Activated CD8-positive, alpha-beta T cell treated with anti-CD3 and anti-CD28 coated beads for 36 hours (primary cell): ENCODE measurements at regions of chr17 and their contacts with region 1.

Region 1: GRCh38 chr17:8118769-8119580 is 661 bp upstream of the ALOXE3 start:
- DNase-seq: peak; percentile 95
- ATAC-seq: peak; percentile 57
- H3K4me3 Mint-ChIP-seq: peak overlapping the region; percentile 97
- H3K27ac Mint-ChIP-seq: peak overlapping the region; percentile 95
- H3K4me1 Mint-ChIP-seq: peaks cover 35% of the 10 kb centered on the region
- H3K27me3 Mint-ChIP-seq: peaks cover 43% of the 10 kb centered on the region
- CTCF ChIP-seq: peak; percentile 94

Region 2: DNA sequence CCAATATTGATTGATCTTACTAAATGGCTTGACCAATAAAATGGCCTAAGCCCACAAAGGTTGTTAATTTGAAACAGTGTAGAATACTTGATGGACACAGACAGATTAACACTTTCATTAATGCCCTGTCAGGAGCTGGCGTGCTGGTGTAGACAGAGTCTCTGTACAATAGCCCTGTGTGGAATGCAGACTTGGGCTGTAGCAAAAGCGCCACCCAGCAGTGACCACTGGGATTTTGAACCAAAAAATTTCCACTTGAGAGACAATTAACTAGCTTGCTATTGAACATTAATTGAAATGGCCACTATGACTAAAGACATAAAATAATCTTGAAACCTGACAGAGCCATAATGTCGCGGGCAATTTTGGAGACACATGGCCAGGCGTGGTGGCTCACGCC is 136.3 kb before region 1 on chr17:
- CTCF ChIA-PET with region 1: no interaction called
- POLR2A ChIA-PET with region 1: no interaction called
- intact Hi-C with region 1: no loop called
- DNase-seq: no peak
- ATAC-seq: no peak
- H3K4me3 Mint-ChIP-seq: no peak overlapping the region
- H3K27ac Mint-ChIP-seq: no peak overlapping the region
- H3K4me1 Mint-ChIP-seq: no peaks in the 10 kb centered on the region
- H3K27me3 Mint-ChIP-seq: peaks cover 2% of the 10 kb centered on the region
- CTCF ChIP-seq: no peak

Region 3: GRCh38 chr17:7997186-7997585 is 121.8 kb before region 1 on chr17:
- CTCF ChIA-PET with region 1: no interaction called
- POLR2A ChIA-PET with region 1: no interaction called
- intact Hi-C with region 1: no loop called
- DNase-seq: peak; percentile 74
- ATAC-seq: peak; percentile 87
- H3K4me3 Mint-ChIP-seq: no peak overlapping the region
- H3K27ac Mint-ChIP-seq: no peak overlapping the region
- H3K4me1 Mint-ChIP-seq: peaks cover 11% of the 10 kb centered on the region
- H3K27me3 Mint-ChIP-seq: peaks cover 19% of the 10 kb centered on the region
- CTCF ChIP-seq: peak; percentile 56

Region 4: DNA sequence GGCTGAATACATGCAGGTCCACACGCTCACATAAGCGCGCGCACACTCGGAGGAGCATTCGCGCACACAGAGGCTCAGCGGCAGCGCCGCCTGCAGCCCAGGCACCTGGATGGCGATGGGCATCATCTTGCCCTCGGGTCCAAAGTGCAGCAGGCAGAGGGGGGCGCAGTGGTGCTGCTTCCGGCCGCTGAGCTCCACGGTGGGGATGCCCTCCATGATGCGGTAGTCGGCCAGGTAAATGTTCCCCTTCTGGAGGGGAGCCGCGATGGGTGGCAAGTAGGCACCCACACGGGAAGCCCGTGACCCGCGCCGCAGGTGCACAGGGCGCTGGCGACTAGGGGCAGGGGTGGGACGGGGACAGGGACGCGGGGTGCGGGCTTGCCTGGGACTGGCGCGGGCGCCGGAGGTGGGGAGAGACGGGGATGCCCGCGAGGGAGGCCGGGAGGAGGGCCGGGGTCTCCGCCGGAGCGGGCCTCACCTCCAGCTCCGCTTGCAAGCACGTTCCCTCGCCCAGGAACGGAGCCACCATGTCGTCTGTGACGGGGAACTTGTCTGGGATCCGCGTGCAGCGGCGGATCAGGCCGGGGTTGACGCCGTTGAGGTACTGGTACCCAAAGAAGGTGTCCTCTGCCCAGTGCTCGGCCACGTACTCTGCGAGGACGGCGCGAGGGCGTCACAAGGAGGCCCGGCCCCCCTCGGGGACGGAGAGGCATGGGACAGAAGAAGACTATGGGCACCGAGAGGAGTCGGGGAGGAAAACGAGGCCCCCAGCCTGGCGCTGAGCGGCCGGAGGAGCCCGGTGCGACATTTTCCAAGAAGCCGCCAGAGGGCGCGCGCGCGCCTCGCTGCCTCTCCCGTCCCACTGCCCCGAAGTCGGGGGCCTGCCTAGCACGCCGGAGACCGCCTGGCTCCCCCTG is 39.4 kb before region 1 on chr17:
- CTCF ChIA-PET with region 1: interaction called, 98 read pairs
- POLR2A ChIA-PET with region 1: interaction called, 16 read pairs
- intact Hi-C with region 1: loop called (anchors 5 kb)
- DNase-seq: peak; percentile 93
- ATAC-seq: peak; percentile 94
- H3K4me3 Mint-ChIP-seq: peak overlapping the region; percentile 96
- H3K27ac Mint-ChIP-seq: peak overlapping the region; percentile 93
- H3K4me1 Mint-ChIP-seq: peaks cover 11% of the 10 kb centered on the region
- H3K27me3 Mint-ChIP-seq: peaks cover 5% of the 10 kb centered on the region
- CTCF ChIP-seq: peak; percentile 87

Region 5: GRCh38 chr17:8138672-8139371 is 19.8 kb after region 1 on chr17:
- CTCF ChIA-PET with region 1: interaction called, 63 read pairs
- POLR2A ChIA-PET with region 1: interaction called, 21 read pairs
- intact Hi-C with region 1: loop called (anchors 2 kb)
- DNase-seq: peak; percentile 98
- ATAC-seq: peak; percentile 90
- H3K4me3 Mint-ChIP-seq: no peak overlapping the region
- H3K27ac Mint-ChIP-seq: no peak overlapping the region
- H3K4me1 Mint-ChIP-seq: no peaks in the 10 kb centered on the region
- H3K27me3 Mint-ChIP-seq: peaks cover 3% of the 10 kb centered on the region
- CTCF ChIP-seq: peak; percentile 87

Region 6: GRCh38 chr17:8162233-8162996 is 43.4 kb after region 1 on chr17 and contains the start of gene VAMP2:
- CTCF ChIA-PET with region 1: interaction called, 18 read pairs
- POLR2A ChIA-PET with region 1: interaction called, 32 read pairs
- intact Hi-C with region 1: no loop called
- DNase-seq: peak; percentile 86
- ATAC-seq: peak; percentile 32
- H3K4me3 Mint-ChIP-seq: peak within 1 kb of the TSS; percentile 88
- H3K27ac Mint-ChIP-seq: peak within 1 kb of the TSS; percentile 99
- H3K4me1 Mint-ChIP-seq: peaks cover 57% of the 10 kb centered on the region
- H3K27me3 Mint-ChIP-seq: no peaks in the 10 kb centered on the region
- CTCF ChIP-seq: no peak
- total RNA-seq, gene VAMP2: 30.0 to 33.7 TPM

Region 7: GRCh38 chr17:8294814-8295316 is 175.9 kb after region 1 on chr17:
- CTCF ChIA-PET with region 1: interaction called, 12 read pairs
- POLR2A ChIA-PET with region 1: no interaction called
- intact Hi-C with region 1: loop called (anchors 10 kb)
- DNase-seq: no peak
- ATAC-seq: no peak
- H3K4me3 Mint-ChIP-seq: peak overlapping the region; percentile 77
- H3K27ac Mint-ChIP-seq: peak overlapping the region; percentile 78
- H3K4me1 Mint-ChIP-seq: peaks cover 32% of the 10 kb centered on the region
- H3K27me3 Mint-ChIP-seq: no peaks in the 10 kb centered on the region
- CTCF ChIP-seq: no peak